ENCODE measurements at regions of chr1 and their contacts with region 1.

Region 1: DNA sequence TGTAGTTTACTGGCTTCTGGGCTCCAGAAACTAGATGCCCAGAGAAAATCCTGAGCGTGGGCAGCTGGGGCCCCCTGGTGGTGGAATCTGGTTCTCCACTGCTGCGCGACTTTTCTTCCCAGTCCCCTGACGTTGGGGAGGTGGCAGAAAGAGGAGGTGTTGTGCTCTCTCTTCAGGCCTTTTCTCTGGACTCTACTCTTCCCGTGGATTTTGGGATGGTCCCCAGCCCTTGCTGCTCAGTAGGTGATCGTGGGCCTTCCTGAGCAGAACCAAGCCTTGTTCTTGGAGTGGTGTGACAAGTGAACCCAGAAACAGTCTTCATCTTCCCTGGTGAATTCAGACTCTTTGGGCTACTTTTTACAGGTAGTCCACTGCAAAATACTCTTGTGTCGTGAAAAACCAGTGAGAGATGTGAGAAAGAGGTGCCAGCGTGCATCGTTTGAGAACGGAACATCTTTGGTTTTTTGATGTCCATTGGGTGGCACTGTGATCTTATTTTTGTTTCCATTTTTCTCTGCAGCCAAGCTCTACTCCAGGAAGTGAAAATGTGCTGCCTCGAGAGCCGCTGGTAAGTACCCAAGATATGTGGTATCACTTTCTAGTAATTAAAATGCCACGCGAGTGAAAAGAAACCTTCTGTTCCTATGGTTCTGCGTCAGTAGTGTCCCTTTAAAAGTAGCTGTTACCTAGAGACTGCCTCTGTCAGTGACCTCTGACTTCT is 20.2 kb downstream of the PEX14 start:
- DNase-seq: peak; percentile 84
- H3K4me3 ChIP-seq: peak overlapping the region in 1 of 2 experiments; percentile 52; a peak in 1 of 4 replicates
- H3K27ac ChIP-seq: peak overlapping the region; percentile 26 to 32; a peak in 2 of 4 replicates
- H3K4me1 ChIP-seq: peaks cover 0 to 10% of the 10 kb centered on the region in 2 experiments; a peak in 1 of 4 replicates
- H3K27me3 ChIP-seq: no peaks in the 10 kb centered on the region
- CTCF ChIP-seq: peak; percentile 97
- EP300 ChIP-seq: no peak
- RAD21 ChIP-seq: peak; percentile 87

Region 2: DNA sequence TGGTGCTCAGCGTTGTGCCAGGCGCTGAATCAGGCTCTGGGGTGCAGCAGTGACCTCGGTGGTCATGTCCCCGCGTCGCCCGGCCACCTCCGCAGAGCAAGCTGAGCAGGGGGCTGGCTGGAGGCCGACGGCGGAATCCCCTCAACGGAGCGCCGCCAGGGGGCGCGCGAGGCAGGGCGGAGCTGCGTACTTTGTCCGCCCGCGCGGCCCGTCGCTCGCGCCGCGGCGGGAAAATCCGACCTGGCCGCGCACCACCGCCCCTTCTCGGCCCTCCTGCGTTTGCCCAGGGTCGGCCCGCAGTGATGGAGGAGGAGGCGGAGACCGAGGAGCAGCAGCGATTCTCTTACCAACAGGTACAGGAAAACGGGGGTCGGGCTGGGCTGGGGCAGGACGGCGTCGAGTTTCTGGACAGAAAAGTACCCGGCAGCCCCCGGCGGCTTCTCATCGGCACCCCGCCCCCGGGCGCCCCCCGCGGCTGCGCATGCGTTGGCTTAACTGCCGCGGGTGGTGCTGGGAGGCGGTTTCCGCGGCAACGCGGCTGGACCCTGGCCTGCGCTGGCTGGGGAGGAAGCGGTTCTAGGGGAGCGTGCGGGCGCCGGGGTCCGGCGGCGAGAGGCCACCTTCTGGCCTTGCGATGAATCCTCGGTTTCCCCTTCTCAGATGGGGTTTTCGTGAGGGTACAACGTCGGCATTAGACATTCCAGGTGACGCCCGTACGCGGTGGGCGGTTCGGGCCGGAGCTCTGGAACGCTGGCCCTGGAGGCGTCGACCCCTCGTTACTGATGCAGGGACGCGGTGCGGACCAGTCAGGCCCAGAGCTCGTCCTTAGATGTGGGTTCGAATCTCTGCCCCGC is 64.5 kb before region 1 on chr1 and contains the start of gene CENPS:
- CTCF ChIA-PET with region 1: interaction called, 203 read pairs
- POLR2A ChIA-PET with region 1: interaction called, 11 read pairs
- DNase-seq: peak; percentile 98
- H3K4me3 ChIP-seq: peak within 1 kb of the TSS; percentile 68 to 82
- H3K27ac ChIP-seq: peak within 1 kb of the TSS; percentile 67 to 85
- H3K4me1 ChIP-seq: peaks cover 3 to 9% of the 10 kb centered on the region in 2 experiments; a peak in 1 of 4 replicates
- H3K27me3 ChIP-seq: no peaks in the 10 kb centered on the region
- CTCF ChIP-seq: peak; percentile 77
- EP300 ChIP-seq: no peak
- RAD21 ChIP-seq: peak; percentile 63
- polyA plus RNA-seq, gene CENPS: 16.6 and 20.0 TPM in 2 replicates

Region 3: GRCh38 chr1:10456661-10457060 is 38.3 kb before region 1 on chr1:
- CTCF ChIA-PET with region 1: interaction called, 16 read pairs
- POLR2A ChIA-PET with region 1: no interaction called
- DNase-seq: no peak
- H3K4me3 ChIP-seq: no peak overlapping the region
- H3K27ac ChIP-seq: peak overlapping the region in 1 of 2 experiments; percentile 39; a peak in 1 of 4 replicates
- H3K4me1 ChIP-seq: peaks cover under 1 to 11% of the 10 kb centered on the region in 2 experiments
- H3K27me3 ChIP-seq: no peaks in the 10 kb centered on the region
- CTCF ChIP-seq: no peak
- EP300 ChIP-seq: no peak
- RAD21 ChIP-seq: no peak

Region 4: GRCh38 chr1:10484521-10484920 is 10.4 kb before region 1 on chr1:
- CTCF ChIA-PET with region 1: interaction called, 23 read pairs
- POLR2A ChIA-PET with region 1: interaction called, 3 read pairs
- DNase-seq: no peak
- H3K4me3 ChIP-seq: no peak overlapping the region
- H3K27ac ChIP-seq: no peak overlapping the region; a peak in 1 of 4 replicates
- H3K4me1 ChIP-seq: peaks cover 0 to under 1% of the 10 kb centered on the region in 2 experiments; a peak in 1 of 4 replicates
- H3K27me3 ChIP-seq: no peaks in the 10 kb centered on the region
- CTCF ChIP-seq: no peak
- EP300 ChIP-seq: no peak
- RAD21 ChIP-seq: no peak

Region 5: GRCh38 chr1:10514490-10515235 is 19.7 kb after region 1 on chr1:
- CTCF ChIA-PET with region 1: interaction called, 157 read pairs
- POLR2A ChIA-PET with region 1: no interaction called
- DNase-seq: peak; percentile 66
- H3K4me3 ChIP-seq: no peak overlapping the region
- H3K27ac ChIP-seq: no peak overlapping the region
- H3K4me1 ChIP-seq: peaks cover 32 to 50% of the 10 kb centered on the region in 2 experiments
- H3K27me3 ChIP-seq: no peaks in the 10 kb centered on the region
- CTCF ChIP-seq: peak; percentile 80
- EP300 ChIP-seq: no peak
- RAD21 ChIP-seq: peak; percentile 92

Region 6: DNA sequence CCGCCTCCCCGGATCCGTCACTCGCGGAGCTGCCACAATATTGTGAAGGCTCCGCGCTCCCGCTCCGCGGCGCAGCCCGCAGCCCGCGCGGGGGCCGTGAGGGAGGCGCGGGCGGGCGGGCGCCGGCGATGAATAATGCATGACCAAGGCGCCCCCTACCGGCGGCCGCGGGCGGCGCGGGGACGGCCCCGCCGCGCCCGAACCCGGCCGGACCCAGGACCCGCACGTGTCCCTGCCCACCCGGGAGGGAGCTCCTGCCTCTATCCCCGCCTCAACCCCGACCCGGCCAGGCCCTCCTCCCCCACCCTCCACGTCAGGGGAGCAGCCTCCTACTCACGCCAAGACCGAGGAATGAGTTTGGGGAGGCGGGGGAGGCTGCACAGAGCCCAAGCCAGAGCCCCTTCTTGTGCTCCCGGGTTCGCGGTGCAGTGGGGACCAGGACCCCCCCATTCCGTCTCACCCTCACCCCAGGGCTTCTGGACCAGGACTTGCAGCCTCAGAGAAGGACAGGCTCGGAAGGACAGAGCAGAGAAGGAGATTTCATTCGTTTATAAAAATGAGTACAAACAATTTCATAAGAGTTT is 372.3 kb after region 1 on chr1:
- CTCF ChIA-PET with region 1: interaction called, 28 read pairs
- POLR2A ChIA-PET with region 1: no interaction called
- DNase-seq: peak; percentile 95
- H3K4me3 ChIP-seq: peak overlapping the region; percentile 44 to 57; a peak in 3 of 4 replicates
- H3K27ac ChIP-seq: no peak overlapping the region; a peak in 1 of 4 replicates
- H3K4me1 ChIP-seq: peaks cover 0 to 17% of the 10 kb centered on the region in 2 experiments; a peak in 2 of 4 replicates
- H3K27me3 ChIP-seq: 0 out of 2 replicates have a peak, but pooled peaks cover 7% of the 10 kb centered on the region
- CTCF ChIP-seq: peak; percentile 61
- EP300 ChIP-seq: no peak; a peak in 1 of 4 replicates
- RAD21 ChIP-seq: peak; percentile 66

Region 7: DNA sequence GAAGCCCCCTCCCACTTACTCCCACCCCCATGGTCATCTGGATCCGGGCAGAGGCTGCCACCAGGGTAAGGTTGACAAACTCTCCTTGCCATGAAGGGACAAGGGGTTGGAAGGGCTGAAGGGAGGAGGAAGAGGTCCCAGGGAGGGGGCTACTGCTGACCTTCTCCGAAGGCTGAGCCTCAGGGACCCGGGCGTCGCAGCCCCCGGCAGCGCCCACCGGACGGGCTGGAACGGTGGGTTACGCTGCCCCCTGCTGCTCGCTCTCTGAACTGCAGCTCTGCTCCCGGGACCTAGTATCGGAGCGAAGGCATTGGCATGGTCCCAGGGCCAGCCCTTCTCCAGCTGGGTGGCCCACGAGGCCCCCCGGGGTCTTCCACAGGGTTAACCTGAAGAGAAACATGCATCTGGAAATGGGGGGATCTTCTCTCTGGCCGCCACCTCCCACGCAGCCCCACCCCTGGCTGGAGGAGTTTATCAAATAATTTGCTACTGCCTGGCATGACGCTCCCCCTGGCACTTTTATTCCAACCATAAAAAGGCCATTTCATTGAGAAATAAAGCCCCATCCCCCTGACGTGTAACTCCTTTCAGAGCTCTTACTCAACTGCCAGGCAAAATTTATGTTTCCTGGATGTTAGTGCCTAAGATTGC is 447.1 kb after region 1 on chr1:
- CTCF ChIA-PET with region 1: interaction called, 12 read pairs
- POLR2A ChIA-PET with region 1: no interaction called
- DNase-seq: peak; percentile 92
- H3K4me3 ChIP-seq: peak overlapping the region in 1 of 2 experiments; percentile 51; a peak in 2 of 4 replicates
- H3K27ac ChIP-seq: no peak overlapping the region
- H3K4me1 ChIP-seq: peaks cover 0 to 55% of the 10 kb centered on the region in 2 experiments; a peak in 3 of 4 replicates
- H3K27me3 ChIP-seq: no peaks in the 10 kb centered on the region
- CTCF ChIP-seq: peak; percentile 88
- EP300 ChIP-seq: no peak
- RAD21 ChIP-seq: peak; percentile 80

Measured in SK-N-SH (cell line).